Activated B cell treated with CpG ODN at 0.5 μM for 24 hours (primary cell): ENCODE measurements at regions of chr2 and their contacts with region 1.

Region 1: GRCh38 chr2:196926562-196927375 is at the start of gene PGAP1:
- DNase-seq: peak; percentile 82
- ATAC-seq: peak; percentile 91
- H3K4me3 Mint-ChIP-seq: peak within 1 kb of the TSS; percentile 90
- H3K27ac Mint-ChIP-seq: peak within 1 kb of the TSS; percentile 86
- H3K4me1 Mint-ChIP-seq: peaks cover 21% of the 10 kb centered on the region
- H3K27me3 Mint-ChIP-seq: peaks cover 13% of the 10 kb centered on the region
- CTCF ChIP-seq: no peak
- total RNA-seq, gene PGAP1: 1.9 and 2.9 TPM in 2 replicates

Region 2: DNA sequence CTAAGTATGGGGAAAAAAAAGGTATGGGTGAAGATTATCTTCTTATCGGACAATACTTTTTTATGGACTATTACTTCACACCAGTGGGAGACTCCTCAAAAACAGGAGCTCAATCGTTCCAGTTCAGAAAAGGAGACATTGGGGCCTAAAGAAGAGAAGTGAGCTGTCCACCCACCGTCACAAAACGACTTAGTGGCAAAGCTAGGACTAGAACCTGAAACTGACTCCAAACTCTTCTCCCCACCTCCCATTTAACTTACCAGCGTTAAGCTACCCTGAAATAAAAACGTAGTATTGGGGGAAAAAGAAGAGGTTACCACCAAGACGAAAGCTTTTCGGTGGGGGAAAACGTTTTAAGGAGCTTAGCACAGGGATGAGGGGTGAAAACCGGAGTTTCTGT is 127.8 kb before region 1 on chr2:
- CTCF ChIA-PET with region 1: no interaction called
- POLR2A ChIA-PET with region 1: interaction called, 6 read pairs
- intact Hi-C with region 1: loop called (anchors 1 kb)
- DNase-seq: no peak
- ATAC-seq: no peak
- H3K4me3 Mint-ChIP-seq: peak overlapping the region; percentile 97
- H3K27ac Mint-ChIP-seq: peak overlapping the region; percentile 92
- H3K4me1 Mint-ChIP-seq: peaks cover 18% of the 10 kb centered on the region
- H3K27me3 Mint-ChIP-seq: peaks cover 7% of the 10 kb centered on the region
- CTCF ChIP-seq: no peak

Region 3: GRCh38 chr2:197159661-197160211 is 233.0 kb after region 1 on chr2:
- CTCF ChIA-PET with region 1: no interaction called
- POLR2A ChIA-PET with region 1: no interaction called
- intact Hi-C with region 1: loop called (anchors 1 kb)
- DNase-seq: no peak
- ATAC-seq: peak; percentile 53
- H3K4me3 Mint-ChIP-seq: peak overlapping the region; percentile 64
- H3K27ac Mint-ChIP-seq: peak overlapping the region; percentile 90
- H3K4me1 Mint-ChIP-seq: peaks cover 93% of the 10 kb centered on the region
- H3K27me3 Mint-ChIP-seq: no peaks in the 10 kb centered on the region
- CTCF ChIP-seq: no peak